Aorta (tissue), 5 donors: ENCODE measurements at regions of chr5 and their contacts with region 1.

Region 1: DNA sequence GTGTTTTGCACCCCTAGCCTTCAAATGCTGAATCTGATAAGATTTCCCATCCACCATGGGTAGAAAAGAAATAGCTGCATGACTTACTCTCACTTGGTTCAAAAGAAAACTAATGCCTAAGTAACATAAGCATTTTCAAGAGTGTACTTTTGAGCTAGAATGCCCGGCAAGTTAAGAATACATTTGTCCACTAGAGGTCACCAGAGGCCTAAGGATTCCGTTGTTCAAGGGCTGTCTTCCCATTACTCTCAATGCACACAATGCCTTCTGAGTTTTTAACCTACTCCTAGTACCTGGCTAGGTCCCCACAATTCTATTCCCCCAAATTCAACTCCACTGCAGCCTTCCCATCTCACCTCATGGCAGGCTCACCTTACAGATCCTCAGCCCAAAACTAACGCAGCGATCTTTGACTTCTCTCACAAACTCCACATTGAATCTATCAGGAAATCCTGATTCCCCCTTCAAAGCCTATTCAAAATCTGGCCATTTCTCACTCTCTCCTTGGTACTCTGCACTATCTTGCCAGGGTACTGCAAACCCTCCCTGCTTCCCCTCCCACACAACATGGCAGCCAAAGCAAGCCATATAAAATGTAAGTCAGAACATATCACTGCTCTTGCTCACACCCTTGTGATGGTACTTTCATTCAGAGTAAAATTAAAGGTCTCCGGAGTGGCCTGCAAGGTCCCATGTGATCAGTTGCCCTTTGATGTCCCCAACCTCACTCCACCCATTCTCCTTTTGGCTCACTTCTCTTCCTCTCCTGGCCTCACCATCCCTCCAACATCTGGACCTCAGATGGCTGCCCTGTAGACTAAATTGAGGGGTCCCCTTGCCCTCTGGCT is 13.4 kb downstream of the OXCT1 start:
- DNase-seq: no peak
- ATAC-seq: peak; percentile 84
- H3K4me3 ChIP-seq: no peak overlapping the region
- H3K27ac ChIP-seq: no peak overlapping the region
- H3K4me1 ChIP-seq: no peaks in the 10 kb centered on the region
- H3K27me3 ChIP-seq: no peaks in the 10 kb centered on the region

Region 2: GRCh38 chr5:41649659-41650058 is 207.2 kb before region 1 on chr5:
- intact Hi-C with region 1: no loop called
- DNase-seq: no peak
- ATAC-seq: no peak
- H3K4me3 ChIP-seq: no peak overlapping the region
- H3K27ac ChIP-seq: no peak overlapping the region
- H3K4me1 ChIP-seq: peaks cover 8 to 9% of the 10 kb centered on the region in 2 donors
- H3K27me3 ChIP-seq: no peaks in the 10 kb centered on the region

Region 3: GRCh38 chr5:41772785-41773442 is 84.0 kb before region 1 on chr5:
- intact Hi-C with region 1: no loop called
- DNase-seq: no peak
- ATAC-seq: no peak
- H3K4me3 ChIP-seq: no peak overlapping the region
- H3K27ac ChIP-seq: no peak overlapping the region
- H3K4me1 ChIP-seq: peaks cover 0 to 3% of the 10 kb centered on the region in 2 donors
- H3K27me3 ChIP-seq: no peaks in the 10 kb centered on the region

Region 4: DNA sequence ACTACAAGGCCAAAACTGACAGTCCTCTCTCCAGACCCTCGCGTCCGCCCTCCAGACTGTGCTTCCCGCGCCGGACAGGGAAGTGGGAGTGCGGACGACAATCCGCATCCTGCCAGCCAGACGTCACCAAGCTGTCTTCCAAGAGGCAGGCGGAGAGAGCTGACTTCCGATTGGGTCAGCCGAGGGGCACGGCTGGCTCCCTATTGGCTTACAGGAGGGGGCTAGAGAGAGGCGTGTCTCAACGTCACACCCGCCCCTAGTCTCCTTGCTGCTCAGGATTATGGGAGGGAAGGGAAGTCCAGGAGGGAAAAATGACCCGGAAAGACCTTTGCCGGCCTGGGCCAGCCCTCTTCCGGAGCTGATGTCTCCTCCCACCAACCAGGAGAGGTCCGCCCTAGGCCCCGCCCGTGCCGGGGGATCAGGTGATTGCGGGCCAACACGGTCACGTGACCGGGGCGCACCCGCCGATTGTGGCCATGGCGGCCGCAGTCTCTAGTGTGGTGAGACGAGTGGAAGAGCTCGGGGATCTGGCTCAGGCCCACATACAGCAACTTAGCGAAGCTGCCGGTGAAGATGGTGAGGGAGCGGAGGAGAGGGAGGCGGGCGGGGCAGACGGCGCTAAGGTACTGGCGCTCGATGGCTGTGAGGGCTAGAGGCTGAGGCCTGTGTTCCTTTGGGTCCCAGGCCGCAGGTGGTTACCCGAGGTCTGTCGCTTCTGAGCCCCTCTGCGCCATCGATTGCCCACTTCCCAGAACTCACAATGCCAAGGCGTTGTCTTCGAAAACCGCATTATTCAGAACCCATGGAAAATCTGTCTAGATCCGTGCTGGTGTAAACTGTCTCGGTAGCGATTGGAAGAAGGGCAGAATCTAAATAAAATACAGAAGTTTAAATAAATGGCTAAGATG is 47.3 kb after region 1 on chr5 and contains the start of gene RIMOC1:
- intact Hi-C with region 1: loop called in 1 of 2 experiments (anchors 5 kb)
- DNase-seq: peak; percentile 99
- ATAC-seq: peak; percentile 100
- H3K4me3 ChIP-seq: peak within 1 kb of the TSS; percentile 65 to 89
- H3K27ac ChIP-seq: peak within 1 kb of the TSS; percentile 80 to 83
- H3K4me1 ChIP-seq: peaks cover 0 to 2% of the 10 kb centered on the region in 2 donors
- H3K27me3 ChIP-seq: no peaks in the 10 kb centered on the region
- total RNA-seq, gene RIMOC1: 25.1 to 25.2 TPM

Region 5: DNA sequence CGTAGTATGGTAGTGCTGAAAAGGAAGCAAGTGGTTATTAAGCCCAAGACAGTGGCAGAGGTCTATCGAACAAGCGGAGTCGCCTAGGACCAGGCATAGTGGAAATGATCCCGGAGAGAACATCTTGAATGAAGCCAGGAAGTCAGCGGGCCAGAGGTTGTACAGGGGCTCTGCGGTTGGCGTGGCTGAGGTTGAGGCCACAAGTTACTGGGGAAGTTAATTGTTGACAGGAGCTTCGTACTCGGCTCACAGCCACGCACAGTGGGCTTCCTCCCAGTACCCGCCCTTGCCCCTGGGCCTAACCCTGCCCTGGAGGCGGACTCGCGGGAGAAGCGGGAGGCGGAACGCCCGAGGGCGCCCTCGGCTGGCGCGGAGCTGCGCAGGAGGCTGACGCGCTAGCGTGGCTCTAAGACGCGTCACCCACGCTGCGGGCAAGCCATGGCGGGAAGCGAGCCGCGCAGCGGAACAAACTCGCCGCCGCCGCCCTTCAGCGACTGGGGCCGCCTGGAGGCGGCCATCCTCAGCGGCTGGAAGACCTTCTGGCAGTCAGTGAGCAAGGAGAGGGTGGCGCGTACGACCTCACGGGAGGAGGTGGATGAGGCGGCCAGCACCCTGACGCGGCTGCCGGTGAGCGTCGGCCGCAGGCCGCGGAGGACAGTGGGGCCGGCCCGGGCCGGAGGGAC is 68.1 kb after region 1 on chr5 and contains the start of gene FBXO4:
- intact Hi-C with region 1: loop called (anchors 1 to 2 kb)
- DNase-seq: peak; percentile 94 to 96
- ATAC-seq: peak; percentile 99
- H3K4me3 ChIP-seq: peak within 1 kb of the TSS; percentile 74 to 86
- H3K27ac ChIP-seq: peak within 1 kb of the TSS; percentile 51 to 99
- H3K4me1 ChIP-seq: no peaks in the 10 kb centered on the region
- H3K27me3 ChIP-seq: no peaks in the 10 kb centered on the region
- total RNA-seq, gene FBXO4: 10.2 to 11.5 TPM

Region 6: DNA sequence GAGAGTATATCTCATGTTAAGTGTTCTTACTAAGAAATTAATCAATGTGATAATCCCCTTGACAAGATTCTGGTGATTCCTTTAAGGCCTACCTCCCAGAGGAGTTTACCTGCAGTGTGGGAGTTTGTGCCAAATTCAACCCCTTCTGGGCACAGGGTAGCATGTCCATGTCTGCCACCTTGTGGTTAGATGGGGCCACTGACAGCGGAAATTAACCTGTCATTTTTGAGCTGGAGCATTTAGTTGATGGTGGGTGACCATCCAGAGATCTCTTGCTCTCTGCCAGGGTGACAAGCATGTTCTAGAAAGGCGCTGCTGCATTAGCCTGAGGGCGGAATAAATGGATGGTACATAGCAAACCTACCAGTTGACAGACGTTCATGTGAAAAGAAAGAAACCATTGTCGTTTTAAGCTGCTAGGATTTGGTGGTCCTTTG is 200.4 kb after region 1 on chr5:
- intact Hi-C with region 1: loop called (anchors 2 to 5 kb)
- DNase-seq: peak in 1 of 2 donors; percentile 73
- ATAC-seq: peak; percentile 48
- H3K4me3 ChIP-seq: no peak overlapping the region
- H3K27ac ChIP-seq: no peak overlapping the region
- H3K4me1 ChIP-seq: no peaks in the 10 kb centered on the region
- H3K27me3 ChIP-seq: no peaks in the 10 kb centered on the region

Region 7: DNA sequence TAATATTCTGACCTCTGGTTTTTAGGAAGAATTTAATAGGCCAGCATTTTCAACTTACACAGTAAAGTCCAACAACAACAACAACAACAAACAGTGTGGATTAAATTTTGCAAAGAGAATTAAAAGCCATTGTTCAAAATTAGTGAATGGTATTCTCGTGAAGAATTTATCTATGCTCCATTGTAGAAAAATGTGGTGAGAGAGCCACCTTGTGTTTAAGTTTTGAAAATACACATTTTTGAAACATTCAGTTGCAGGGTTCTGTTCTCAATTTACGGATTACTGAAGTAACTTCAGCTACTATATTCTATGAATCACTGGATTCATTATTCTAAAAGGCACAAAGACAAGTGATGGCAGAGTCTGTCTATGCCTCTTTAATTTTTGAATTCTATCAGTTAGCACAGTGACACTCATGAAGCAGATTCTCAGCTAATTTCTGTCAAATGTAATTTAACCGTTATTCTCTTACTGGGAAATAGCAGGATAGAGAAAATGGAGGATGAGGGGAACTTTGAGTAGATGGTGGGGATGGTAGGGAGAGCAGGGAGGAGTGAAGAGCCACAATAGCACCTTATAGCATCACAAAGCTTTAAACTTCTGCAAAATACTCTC is 910.7 kb after region 1 on chr5:
- intact Hi-C with region 1: loop called (anchors 1 to 5 kb)
- DNase-seq: no peak
- ATAC-seq: peak; percentile 60
- H3K4me3 ChIP-seq: no peak overlapping the region
- H3K27ac ChIP-seq: no peak overlapping the region
- H3K4me1 ChIP-seq: no peaks in the 10 kb centered on the region
- H3K27me3 ChIP-seq: no peaks in the 10 kb centered on the region

Region 8: GRCh38 chr5:42889311-42889933 is 1032.6 kb after region 1 on chr5:
- intact Hi-C with region 1: loop called in 1 of 2 experiments (anchors 10 kb)
- DNase-seq: peak in 1 of 2 donors; percentile 81
- ATAC-seq: peak; percentile 91
- H3K4me3 ChIP-seq: no peak overlapping the region
- H3K27ac ChIP-seq: no peak overlapping the region
- H3K4me1 ChIP-seq: no peaks in the 10 kb centered on the region
- H3K27me3 ChIP-seq: peaks cover 0 to 2% of the 10 kb centered on the region in 2 donors